AG04450 (cell line): ENCODE measurements at regions of chr16 and their contacts with region 1.

Region 1: GRCh38 chr16:67137605-67138004 is 13.2 kb downstream of the B3GNT9 start:
- DNase-seq: no peak
- H3K4me3 ChIP-seq: no peak overlapping the region
- H3K27ac ChIP-seq: no peak overlapping the region
- H3K27me3 ChIP-seq: no peaks in the 10 kb centered on the region
- CTCF ChIP-seq: no peak

Region 2: DNA sequence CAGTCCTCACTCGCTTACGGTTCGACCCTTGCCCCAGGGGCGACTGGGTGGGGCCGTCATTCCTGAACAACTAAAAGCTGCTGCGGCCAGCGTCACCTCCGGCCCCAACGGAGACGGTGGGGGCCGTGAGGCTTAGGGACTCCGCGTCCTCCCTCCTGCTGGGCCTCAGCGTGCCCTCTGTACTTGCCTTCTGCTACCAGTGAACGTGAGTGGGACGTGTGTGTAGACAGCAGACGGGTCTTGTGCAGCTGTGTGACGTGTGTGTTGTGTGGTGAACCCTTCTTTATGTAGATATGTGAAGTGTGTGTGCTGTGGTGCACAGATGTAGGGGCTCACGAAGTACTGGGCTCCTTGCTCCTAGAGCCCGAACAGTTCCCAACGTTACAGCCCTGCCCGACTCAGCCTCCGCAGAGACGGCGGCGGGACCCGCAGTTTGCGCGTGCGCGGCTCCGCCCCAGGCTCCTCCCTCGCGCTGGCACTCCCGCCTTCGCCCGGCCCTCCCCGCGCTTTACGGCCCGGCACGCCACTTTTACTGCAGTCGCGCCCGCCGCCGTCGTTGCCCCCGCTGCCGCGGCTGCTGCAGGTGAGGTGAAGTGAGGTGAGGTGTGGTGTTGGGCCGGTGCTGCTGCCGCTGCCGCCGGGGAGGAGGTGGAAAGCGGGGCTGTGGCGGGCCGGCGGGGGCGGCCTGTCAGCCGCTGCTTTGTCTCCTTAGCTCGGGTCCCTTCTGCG is 28.0 kb before region 1 on chr16 and contains the start of gene PHAF1:
- CTCF ChIA-PET with region 1: no interaction called
- POLR2A ChIA-PET with region 1: interaction called, 13 read pairs
- DNase-seq: peak; percentile 64
- H3K4me3 ChIP-seq: peak within 1 kb of the TSS; percentile 88
- H3K27ac ChIP-seq: peak within 1 kb of the TSS; percentile 68
- H3K27me3 ChIP-seq: no peaks in the 10 kb centered on the region
- CTCF ChIP-seq: no peak
- polyA plus RNA-seq, gene PHAF1: 24.6 and 26.1 TPM in 2 replicates

Region 3: GRCh38 chr16:67150833-67151396 is 13.3 kb after region 1 on chr16 and contains the start of gene B3GNT9:
- CTCF ChIA-PET with region 1: interaction called, 15 read pairs
- POLR2A ChIA-PET with region 1: interaction called, 13 read pairs
- DNase-seq: peak; percentile 37
- H3K4me3 ChIP-seq: peak within 1 kb of the TSS; percentile 63
- H3K27ac ChIP-seq: peak within 1 kb of the TSS; percentile 82
- H3K27me3 ChIP-seq: peaks cover 8% of the 10 kb centered on the region
- CTCF ChIP-seq: no peak
- polyA plus RNA-seq, gene B3GNT9: 18.6 and 25.6 TPM in 2 replicates